CD8-positive, alpha-beta T cell (primary cell): ENCODE measurements at regions of chr17 and their contacts with region 1.

Region 1: GRCh38 chr17:74742153-74742515 is 5.1 kb downstream of the RAB37 start:
- DNase-seq: peak in 8 of 9 experiments; percentile 40 to 86 (median 64)
- ATAC-seq: no peak
- H3K4me3 ChIP-seq: peak overlapping the region; percentile 20 to 23
- H3K4me3 Mint-ChIP-seq: peak overlapping the region; percentile 76
- H3K27ac ChIP-seq: peak overlapping the region; percentile 31 to 62
- H3K27ac Mint-ChIP-seq: peak overlapping the region; percentile 95
- H3K4me1 ChIP-seq: peaks cover 76% of the 10 kb centered on the region
- H3K4me1 Mint-ChIP-seq: peaks cover 87% of the 10 kb centered on the region
- H3K27me3 ChIP-seq: no peaks in the 10 kb centered on the region
- H3K27me3 Mint-ChIP-seq: no peaks in the 10 kb centered on the region
- CTCF ChIP-seq: no peak

Region 2: DNA sequence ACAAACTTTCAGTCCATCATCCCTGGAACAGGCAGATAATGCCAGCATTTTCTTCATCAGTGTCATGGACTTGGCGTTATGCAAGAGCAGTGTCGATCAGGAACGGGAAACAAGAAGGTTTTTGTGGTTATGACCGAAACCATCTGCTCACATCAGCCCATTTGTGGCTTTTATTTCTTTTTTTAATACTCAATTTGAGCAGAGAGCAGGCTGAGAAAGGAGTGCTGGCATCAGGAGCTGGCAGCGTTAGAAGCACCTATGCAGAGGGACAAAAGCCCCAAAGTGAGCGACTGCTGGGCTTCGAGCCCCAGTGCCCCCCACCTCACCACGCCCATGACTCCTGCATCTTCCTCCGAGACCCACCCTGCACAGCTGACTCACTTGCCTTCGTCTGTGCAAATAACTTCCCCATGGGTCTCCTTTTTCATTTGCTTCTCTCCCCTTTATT is 102.4 kb before region 1 on chr17:
- CTCF ChIA-PET with region 1: no interaction called
- POLR2A ChIA-PET with region 1: no interaction called
- intact Hi-C with region 1: no loop called
- DNase-seq: peak in 1 of 9 experiments; percentile 30
- ATAC-seq: no peak
- H3K4me3 ChIP-seq: no peak overlapping the region
- H3K4me3 Mint-ChIP-seq: no peak overlapping the region
- H3K27ac ChIP-seq: no peak overlapping the region
- H3K27ac Mint-ChIP-seq: no peak overlapping the region
- H3K4me1 ChIP-seq: peaks cover 10% of the 10 kb centered on the region
- H3K4me1 Mint-ChIP-seq: peaks cover 7% of the 10 kb centered on the region
- H3K27me3 ChIP-seq: peaks cover 2 to 11% of the 10 kb centered on the region in 2 experiments
- H3K27me3 Mint-ChIP-seq: peaks cover 34% of the 10 kb centered on the region
- CTCF ChIP-seq: no peak

Region 3: GRCh38 chr17:74770498-74771318 is 28.6 kb after region 1 on chr17:
- CTCF ChIA-PET with region 1: interaction called, 92 read pairs
- POLR2A ChIA-PET with region 1: interaction called, 22 read pairs
- intact Hi-C with region 1: loop called (anchors 1 kb)
- DNase-seq: peak; percentile 62 to 88 (median 78)
- ATAC-seq: peak; percentile 95
- H3K4me3 ChIP-seq: no peak overlapping the region
- H3K4me3 Mint-ChIP-seq: no peak overlapping the region
- H3K27ac ChIP-seq: peak overlapping the region in 1 of 2 experiments; percentile 18
- H3K27ac Mint-ChIP-seq: peak overlapping the region; percentile 81
- H3K4me1 ChIP-seq: peaks cover 21% of the 10 kb centered on the region
- H3K4me1 Mint-ChIP-seq: peaks cover 36% of the 10 kb centered on the region
- H3K27me3 ChIP-seq: no peaks in the 10 kb centered on the region
- H3K27me3 Mint-ChIP-seq: no peaks in the 10 kb centered on the region
- CTCF ChIP-seq: peak; percentile 70

Region 4: GRCh38 chr17:76314392-76315227 is 1572.5 kb after region 1 on chr17:
- CTCF ChIA-PET with region 1: no interaction called
- POLR2A ChIA-PET with region 1: no interaction called
- intact Hi-C with region 1: no loop called
- DNase-seq: no peak
- ATAC-seq: no peak
- H3K4me3 ChIP-seq: no peak overlapping the region
- H3K4me3 Mint-ChIP-seq: no peak overlapping the region
- H3K27ac ChIP-seq: no peak overlapping the region
- H3K27ac Mint-ChIP-seq: no peak overlapping the region
- H3K4me1 ChIP-seq: no peaks in the 10 kb centered on the region
- H3K4me1 Mint-ChIP-seq: no peaks in the 10 kb centered on the region
- H3K27me3 ChIP-seq: no peaks in the 10 kb centered on the region
- H3K27me3 Mint-ChIP-seq: no peaks in the 10 kb centered on the region
- CTCF ChIP-seq: no peak